ENCODE measurements at regions of chr7 and their contacts with region 1.

Region 1: DNA sequence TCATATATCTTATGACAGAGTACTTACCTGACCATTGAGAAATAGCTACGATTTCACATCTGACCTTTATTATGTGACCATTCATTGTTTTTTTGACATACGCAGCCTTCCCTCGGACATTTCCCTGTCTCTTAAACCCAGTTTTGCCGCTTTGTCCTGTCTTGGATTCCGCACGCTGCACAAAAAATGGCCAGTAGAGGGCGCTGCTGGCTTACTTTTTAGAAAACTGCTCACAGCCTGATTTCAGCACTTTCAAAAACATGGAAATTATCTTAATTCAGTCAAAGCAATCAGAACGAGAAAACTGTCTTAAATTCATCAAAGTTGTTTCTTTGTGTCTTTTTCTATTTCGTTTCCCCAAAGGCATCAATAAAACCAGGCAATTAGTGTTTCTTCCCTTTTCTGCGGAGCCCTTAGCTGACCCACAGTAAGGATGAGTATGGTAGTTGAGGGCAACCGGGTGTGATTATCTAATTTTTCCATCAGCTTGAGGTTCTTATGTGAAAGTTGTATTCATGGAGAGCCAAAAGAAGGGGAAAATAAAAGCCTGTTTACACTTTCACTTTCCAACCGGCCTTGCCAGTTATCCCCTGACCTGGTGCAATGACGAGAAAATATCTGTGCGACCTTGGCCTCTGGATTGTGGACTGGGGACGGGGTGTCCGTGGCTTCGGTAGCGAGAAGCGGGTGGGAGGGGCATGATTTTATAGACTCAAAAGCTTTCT is 144.4 kb downstream of the DYNC1I1 start:
- DNase-seq: peak; percentile 82
- H3K4me3 Mint-ChIP-seq: no peak overlapping the region
- H3K27ac Mint-ChIP-seq: no peak overlapping the region
- H3K4me1 Mint-ChIP-seq: peaks cover 2% of the 10 kb centered on the region
- H3K27me3 Mint-ChIP-seq: peaks cover 18% of the 10 kb centered on the region

Region 2: DNA sequence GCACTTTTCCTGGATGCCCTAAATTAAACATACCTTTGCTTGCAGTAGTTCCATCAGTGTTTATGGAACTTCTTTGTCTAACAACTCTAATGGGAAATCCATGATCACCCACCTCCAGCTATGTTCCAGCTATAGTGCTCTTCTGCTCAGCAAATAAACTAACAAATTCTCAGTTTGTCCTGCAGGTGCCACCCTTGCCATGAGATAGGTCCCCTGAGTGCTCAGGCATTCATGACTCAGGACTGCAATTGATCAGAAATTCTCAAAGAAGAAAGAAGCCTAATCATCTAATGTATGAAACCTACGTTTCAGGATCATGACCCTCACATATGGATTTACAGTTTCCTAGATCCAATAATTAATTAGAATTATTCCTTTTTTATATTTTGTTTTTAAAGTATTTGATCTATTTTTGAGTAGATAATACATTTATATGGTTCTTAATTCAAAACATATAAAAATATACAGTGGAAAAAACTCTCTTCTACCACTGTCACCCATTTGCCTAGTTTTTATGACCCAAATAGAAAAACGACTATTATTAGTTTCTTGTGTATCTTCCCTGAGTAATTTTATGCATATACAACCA is 193.0 kb before region 1 on chr7:
- CTCF ChIA-PET with region 1: no interaction called
- POLR2A ChIA-PET with region 1: no interaction called
- intact Hi-C with region 1: no loop called
- DNase-seq: peak; percentile 13
- H3K4me3 Mint-ChIP-seq: no peak overlapping the region
- H3K27ac Mint-ChIP-seq: no peak overlapping the region
- H3K4me1 Mint-ChIP-seq: no peaks in the 10 kb centered on the region
- H3K27me3 Mint-ChIP-seq: no peaks in the 10 kb centered on the region

Region 3: DNA sequence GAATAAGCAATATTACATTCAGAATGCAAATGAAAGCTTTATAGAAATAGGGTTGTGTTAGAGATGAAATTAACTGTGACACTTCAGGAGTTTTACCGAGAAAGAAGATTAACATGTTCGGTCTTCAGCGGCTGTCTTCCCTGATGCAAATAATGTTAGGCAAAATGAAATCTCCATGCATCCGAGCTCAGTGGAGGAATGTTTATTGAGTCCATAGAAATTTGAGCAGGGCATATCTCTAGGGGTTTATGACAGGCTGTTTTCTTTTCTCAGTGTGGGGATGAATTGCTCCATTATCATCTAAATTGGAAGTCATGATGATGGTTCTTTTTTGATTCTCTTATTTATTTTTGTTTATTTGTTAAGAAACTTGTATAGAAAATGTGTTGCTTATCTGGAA is 112.7 kb before region 1 on chr7:
- CTCF ChIA-PET with region 1: no interaction called
- POLR2A ChIA-PET with region 1: no interaction called
- intact Hi-C with region 1: no loop called
- DNase-seq: no peak
- H3K4me3 Mint-ChIP-seq: no peak overlapping the region
- H3K27ac Mint-ChIP-seq: no peak overlapping the region
- H3K4me1 Mint-ChIP-seq: no peaks in the 10 kb centered on the region
- H3K27me3 Mint-ChIP-seq: no peaks in the 10 kb centered on the region

Region 4: GRCh38 chr7:95905165-95905564 is 11.6 kb before region 1 on chr7:
- CTCF ChIA-PET with region 1: interaction called, 21 read pairs
- POLR2A ChIA-PET with region 1: no interaction called
- intact Hi-C with region 1: no loop called
- DNase-seq: no peak
- H3K4me3 Mint-ChIP-seq: no peak overlapping the region
- H3K27ac Mint-ChIP-seq: no peak overlapping the region
- H3K4me1 Mint-ChIP-seq: no peaks in the 10 kb centered on the region
- H3K27me3 Mint-ChIP-seq: peaks cover 7% of the 10 kb centered on the region

Region 5: GRCh38 chr7:96075510-96076349 is 159.0 kb after region 1 on chr7:
- CTCF ChIA-PET with region 1: interaction called, 3 read pairs
- POLR2A ChIA-PET with region 1: no interaction called
- intact Hi-C with region 1: loop called (anchors 5 kb)
- DNase-seq: peak; percentile 58
- H3K4me3 Mint-ChIP-seq: peak overlapping the region; percentile 53
- H3K27ac Mint-ChIP-seq: no peak overlapping the region
- H3K4me1 Mint-ChIP-seq: peaks cover 7% of the 10 kb centered on the region
- H3K27me3 Mint-ChIP-seq: peaks cover 20% of the 10 kb centered on the region

Region 6: DNA sequence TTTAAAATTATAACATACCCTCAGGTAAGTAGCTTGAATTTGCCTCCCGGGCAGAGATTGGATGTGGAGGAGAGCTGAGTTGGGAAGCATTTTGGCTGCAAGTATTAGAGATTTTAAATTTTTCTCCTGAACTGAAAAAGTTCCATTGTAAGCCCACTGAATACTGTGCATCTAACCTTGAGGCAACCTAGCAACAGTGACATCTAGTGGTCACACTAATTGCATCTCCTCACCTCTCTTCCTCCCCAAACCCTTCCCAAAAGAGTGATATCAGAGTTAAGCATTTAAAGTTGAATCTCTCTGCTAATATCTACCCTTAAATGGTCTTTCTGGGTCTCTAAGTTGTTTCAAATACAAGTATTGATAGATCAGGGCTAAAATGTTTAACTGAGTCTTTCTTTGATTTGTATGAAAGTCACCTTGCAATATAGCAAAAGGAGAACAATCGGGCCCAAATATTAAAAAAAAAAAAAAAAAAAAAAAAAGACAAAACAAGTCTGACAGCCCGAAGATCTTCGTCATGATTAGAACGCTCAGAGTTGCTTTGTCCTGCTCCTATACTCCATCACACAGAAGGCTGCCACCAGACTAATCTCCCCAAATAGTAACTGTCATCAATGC is 1148.3 kb after region 1 on chr7:
- CTCF ChIA-PET with region 1: interaction called, 30 read pairs
- POLR2A ChIA-PET with region 1: no interaction called
- intact Hi-C with region 1: loop called (anchors 2 kb)
- DNase-seq: no peak
- H3K4me3 Mint-ChIP-seq: no peak overlapping the region
- H3K27ac Mint-ChIP-seq: no peak overlapping the region
- H3K4me1 Mint-ChIP-seq: no peaks in the 10 kb centered on the region
- H3K27me3 Mint-ChIP-seq: peaks cover 5% of the 10 kb centered on the region

Measured in activated CD4-positive, alpha-beta memory T cell treated with anti-CD3 and anti-CD28 coated beads for 36 hours (primary cell).